ENCODE measurements at regions of chr13 and their contacts with region 1.

Region 1: GRCh38 chr13:51286135-51287002 is 53.1 kb upstream of the SERPINE3 start:
- DNase-seq: peak; percentile 89
- ATAC-seq: peak; percentile 84
- H3K4me3 Mint-ChIP-seq: no peak overlapping the region
- H3K27ac Mint-ChIP-seq: no peak overlapping the region
- H3K4me1 Mint-ChIP-seq: peaks cover 45% of the 10 kb centered on the region
- H3K27me3 Mint-ChIP-seq: no peaks in the 10 kb centered on the region
- CTCF ChIP-seq: peak; percentile 89

Region 2: GRCh38 chr13:50873467-50873866 is 412.9 kb before region 1 on chr13:
- CTCF ChIA-PET with region 1: no interaction called
- POLR2A ChIA-PET with region 1: no interaction called
- DNase-seq: no peak
- ATAC-seq: no peak
- H3K4me3 Mint-ChIP-seq: no peak overlapping the region
- H3K27ac Mint-ChIP-seq: no peak overlapping the region
- H3K4me1 Mint-ChIP-seq: no peaks in the 10 kb centered on the region
- H3K27me3 Mint-ChIP-seq: no peaks in the 10 kb centered on the region; the same call in 1 of the 2 replicates
- CTCF ChIP-seq: no peak

Region 3: DNA sequence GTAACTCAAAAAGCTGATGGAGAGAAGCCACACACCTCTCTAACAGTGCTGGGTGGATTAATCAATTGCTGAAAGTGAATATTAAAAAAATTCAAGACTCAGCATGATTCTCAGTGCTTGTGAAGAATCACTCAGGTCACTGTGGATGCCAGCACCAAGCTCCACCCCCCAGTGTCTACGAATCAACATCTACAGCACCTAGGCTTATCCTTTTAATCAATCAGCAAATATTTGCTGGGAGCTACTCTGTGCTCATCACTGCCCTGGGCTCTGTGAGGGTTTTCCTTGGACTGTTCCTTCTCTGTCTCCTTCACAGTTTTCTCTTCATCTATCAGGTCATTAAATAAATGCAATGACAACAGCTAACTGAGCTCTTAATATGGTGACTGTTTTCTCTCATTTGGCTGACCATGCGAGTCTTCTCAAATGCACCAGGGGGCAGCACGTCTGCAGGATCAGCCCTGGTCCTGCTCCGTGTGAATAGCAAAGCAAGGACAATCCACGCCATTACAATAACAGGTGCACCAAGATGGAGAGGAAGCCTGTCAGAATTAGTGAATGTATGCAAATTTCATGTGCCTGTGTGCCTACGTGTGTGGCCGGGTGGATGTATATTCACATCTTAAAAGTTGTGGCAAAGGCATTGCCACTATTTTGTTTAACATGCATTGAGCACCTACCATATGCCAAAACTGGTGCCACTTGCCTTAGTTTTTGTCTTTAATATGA is 160.7 kb before region 1 on chr13:
- CTCF ChIA-PET with region 1: interaction called, 203 read pairs
- POLR2A ChIA-PET with region 1: interaction called, 3 read pairs
- DNase-seq: peak; percentile 66
- ATAC-seq: peak; percentile 85
- H3K4me3 Mint-ChIP-seq: no peak overlapping the region
- H3K27ac Mint-ChIP-seq: 0 out of 2 replicates have a peak overlapping the region, but pooled peaks have one; percentile 4
- H3K4me1 Mint-ChIP-seq: peaks cover 41% of the 10 kb centered on the region
- H3K27me3 Mint-ChIP-seq: peaks cover 6% of the 10 kb centered on the region
- CTCF ChIP-seq: peak; percentile 77

Region 4: GRCh38 chr13:51192348-51192747 is 94.0 kb before region 1 on chr13:
- CTCF ChIA-PET with region 1: interaction called, 19 read pairs
- POLR2A ChIA-PET with region 1: no interaction called
- DNase-seq: no peak
- ATAC-seq: no peak
- H3K4me3 Mint-ChIP-seq: no peak overlapping the region
- H3K27ac Mint-ChIP-seq: no peak overlapping the region
- H3K4me1 Mint-ChIP-seq: 0 out of 2 replicates have a peak, but pooled peaks cover 4% of the 10 kb centered on the region
- H3K27me3 Mint-ChIP-seq: peaks cover 42% of the 10 kb centered on the region
- CTCF ChIP-seq: no peak

Region 5: DNA sequence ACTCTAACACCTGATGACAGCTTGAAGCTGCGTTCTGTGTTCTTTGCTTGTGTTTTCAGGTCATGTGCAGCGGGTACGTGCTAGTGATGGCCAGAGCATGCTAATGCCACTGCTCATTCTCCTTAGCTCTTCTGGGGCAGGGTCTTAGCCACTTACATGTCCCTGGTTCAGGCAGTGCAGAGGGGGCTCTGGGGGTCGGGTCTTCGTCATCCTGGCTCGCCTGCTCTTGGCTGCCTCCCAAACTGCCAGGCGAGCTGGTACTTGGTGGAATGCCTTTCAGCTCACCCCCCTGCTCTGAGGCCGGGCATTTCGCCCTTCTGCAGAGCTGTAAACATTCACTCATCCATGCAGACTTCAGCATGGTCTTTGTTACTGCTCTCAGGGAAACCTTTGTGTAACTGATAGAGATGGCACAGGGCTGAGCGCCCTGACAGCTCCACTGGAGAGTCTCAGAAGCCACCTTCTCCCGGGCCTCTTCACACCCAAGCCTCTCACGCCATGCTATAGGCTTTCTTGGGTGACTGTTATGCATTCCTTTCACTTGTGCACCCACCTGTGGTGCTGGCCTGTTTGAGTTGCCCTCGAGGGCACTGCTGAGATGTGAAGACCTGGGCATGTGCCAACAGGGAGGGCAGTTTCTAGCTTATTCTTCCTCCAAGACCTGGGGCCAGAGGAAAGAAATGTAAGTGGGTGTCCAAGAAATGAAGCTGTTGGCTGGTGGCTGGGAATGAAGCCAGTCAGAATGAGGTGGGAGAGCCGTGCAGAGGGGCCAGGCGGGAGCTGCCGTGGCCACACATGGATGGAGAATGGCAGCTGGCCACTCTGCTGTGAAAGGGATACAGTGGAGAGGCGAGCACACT is 39.7 kb before region 1 on chr13:
- CTCF ChIA-PET with region 1: interaction called, 37 read pairs
- POLR2A ChIA-PET with region 1: interaction called, 8 read pairs
- DNase-seq: no peak
- ATAC-seq: no peak
- H3K4me3 Mint-ChIP-seq: no peak overlapping the region
- H3K27ac Mint-ChIP-seq: peak overlapping the region; percentile 46
- H3K4me1 Mint-ChIP-seq: no peaks in the 10 kb centered on the region; the same call in 1 of the 2 replicates
- H3K27me3 Mint-ChIP-seq: no peaks in the 10 kb centered on the region
- CTCF ChIP-seq: no peak

Region 6: DNA sequence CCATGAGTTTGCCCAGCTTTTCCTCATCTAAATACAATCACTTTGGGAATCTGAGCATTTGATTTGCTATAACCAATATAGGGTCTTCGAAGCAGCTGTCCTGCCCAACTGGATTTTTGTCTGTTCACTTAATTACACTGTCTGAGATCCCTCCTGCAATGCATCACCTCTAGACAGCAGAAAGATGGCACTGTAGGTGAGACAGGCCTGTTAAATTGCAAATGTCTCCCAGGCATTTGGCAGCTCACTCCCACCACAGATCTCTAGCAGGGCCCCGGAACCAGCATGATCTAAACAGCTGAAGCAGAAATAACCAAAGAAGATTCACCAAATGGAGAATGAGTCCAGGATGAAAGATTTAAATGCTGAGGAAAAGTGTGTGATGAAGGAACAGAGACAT is 11.2 kb after region 1 on chr13:
- CTCF ChIA-PET with region 1: interaction called, 44 read pairs
- POLR2A ChIA-PET with region 1: no interaction called
- DNase-seq: no peak
- ATAC-seq: peak; percentile 43
- H3K4me3 Mint-ChIP-seq: no peak overlapping the region
- H3K27ac Mint-ChIP-seq: no peak overlapping the region
- H3K4me1 Mint-ChIP-seq: peaks cover 62% of the 10 kb centered on the region
- H3K27me3 Mint-ChIP-seq: peaks cover 8% of the 10 kb centered on the region
- CTCF ChIP-seq: no peak

Region 7: DNA sequence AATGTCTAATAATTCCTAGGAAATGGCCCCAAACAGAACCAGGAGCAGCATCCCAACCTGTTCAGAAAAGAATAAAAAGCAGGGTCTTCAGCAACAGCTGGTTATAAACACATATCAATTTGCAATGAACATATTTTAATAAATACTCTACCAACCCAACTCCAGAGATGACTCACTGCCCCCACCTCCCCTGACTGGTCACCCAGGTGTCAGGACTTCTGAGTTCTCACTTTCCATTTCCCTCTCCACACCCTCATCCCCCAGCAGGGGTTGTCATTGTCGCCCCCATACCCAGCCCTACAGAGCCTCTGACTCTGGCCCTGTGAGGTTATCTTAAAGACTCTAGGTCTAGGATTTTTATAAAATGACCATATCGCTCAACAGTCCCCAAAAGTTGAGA is 60.0 kb after region 1 on chr13:
- CTCF ChIA-PET with region 1: interaction called, 13 read pairs
- POLR2A ChIA-PET with region 1: no interaction called
- DNase-seq: no peak
- ATAC-seq: peak; percentile 16; the same call in 1 of the 2 replicates
- H3K4me3 Mint-ChIP-seq: no peak overlapping the region
- H3K27ac Mint-ChIP-seq: no peak overlapping the region
- H3K4me1 Mint-ChIP-seq: peaks cover 30% of the 10 kb centered on the region
- H3K27me3 Mint-ChIP-seq: no peaks in the 10 kb centered on the region
- CTCF ChIP-seq: no peak